ENCODE measurements at regions of chr22 and their contacts with region 1.

Region 1: DNA sequence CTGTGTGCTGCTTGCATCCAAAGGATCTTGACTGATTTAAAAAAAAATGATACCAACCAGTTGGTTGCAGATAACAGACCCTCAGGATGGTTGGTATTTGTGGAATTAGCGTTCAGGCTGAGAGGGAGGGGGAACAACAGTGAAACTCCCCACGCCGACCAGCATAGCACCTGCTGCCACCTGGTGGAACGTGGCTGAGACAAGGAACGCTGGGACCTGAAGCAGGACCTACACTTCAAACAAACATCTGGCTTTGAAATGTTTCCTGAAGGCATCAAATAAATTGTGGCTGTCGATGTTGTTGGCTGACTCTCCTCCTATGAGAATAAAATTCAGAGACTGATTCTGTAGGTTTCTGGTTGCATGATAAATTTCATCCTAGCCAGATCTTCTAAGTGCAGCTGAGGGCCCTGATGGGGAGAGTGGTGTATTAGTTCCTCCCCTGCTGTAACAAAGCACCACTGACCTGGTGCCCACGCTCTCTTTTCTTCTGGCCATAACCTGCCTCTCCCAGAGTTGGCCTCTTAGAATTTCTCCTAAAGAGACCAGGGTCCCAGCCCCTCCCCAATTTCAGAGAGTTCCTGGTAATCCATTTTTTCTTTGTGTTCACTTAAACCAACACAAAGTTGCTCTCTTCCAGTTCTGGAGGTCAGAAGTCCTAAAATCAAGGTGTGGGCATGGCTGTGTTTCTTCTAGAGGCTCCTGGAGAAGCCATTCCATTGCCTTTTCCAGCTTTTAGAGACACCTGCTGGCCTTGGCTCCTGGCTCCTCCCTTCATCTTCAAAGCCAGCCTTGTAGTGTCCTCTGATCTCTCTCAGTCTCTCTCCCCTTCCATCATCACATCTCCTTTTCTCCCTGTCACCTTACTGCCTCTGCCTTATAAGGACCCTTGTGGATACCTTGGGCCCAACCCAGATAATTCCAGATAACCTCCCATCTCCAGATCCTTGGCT is 17.3 kb downstream of the APOL2 start:
- DNase-seq: peak; percentile 57
- H3K4me3 ChIP-seq: no peak overlapping the region
- H3K27ac ChIP-seq: no peak overlapping the region
- H3K4me1 ChIP-seq: peaks cover 0 to 7% of the 10 kb centered on the region in 2 experiments; a peak in 1 of 4 replicates
- H3K27me3 ChIP-seq: peaks cover 7% of the 10 kb centered on the region; the same call in 1 of the 2 replicates
- CTCF ChIP-seq: peak; percentile 66
- EP300 ChIP-seq: no peak
- RAD21 ChIP-seq: peak; percentile 67

Region 2: DNA sequence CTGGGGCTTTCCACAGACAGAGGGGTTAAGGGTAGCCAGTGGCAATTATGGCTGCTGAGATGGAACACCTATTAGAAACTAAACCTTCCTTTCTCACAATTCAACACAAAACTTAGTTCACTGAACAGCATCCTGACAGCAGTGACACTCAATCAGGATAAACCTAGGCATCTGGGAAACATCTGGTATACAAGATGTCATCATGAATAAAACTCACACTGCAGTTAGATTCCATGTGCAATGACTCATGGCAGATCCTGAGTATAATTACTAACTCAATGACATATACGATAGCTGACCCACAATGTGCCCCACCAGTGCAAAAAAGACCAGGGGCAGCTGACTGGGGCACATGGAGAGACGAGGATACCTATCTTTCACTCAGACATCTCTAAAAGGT is 211.2 kb before region 1 on chr22:
- CTCF ChIA-PET with region 1: no interaction called
- POLR2A ChIA-PET with region 1: no interaction called
- DNase-seq: peak; percentile 66
- H3K4me3 ChIP-seq: no peak overlapping the region
- H3K27ac ChIP-seq: peak overlapping the region; percentile 72 to 96
- H3K4me1 ChIP-seq: peaks cover 52 to 57% of the 10 kb centered on the region in 2 experiments
- H3K27me3 ChIP-seq: no peaks in the 10 kb centered on the region
- CTCF ChIP-seq: no peak
- EP300 ChIP-seq: peak; percentile 96 to 97
- RAD21 ChIP-seq: peak; percentile 19; the same call in 1 of the 2 replicates

Region 3: GRCh38 chr22:36239401-36240171 is 17.5 kb after region 1 on chr22 and contains the start of gene APOL2:
- CTCF ChIA-PET with region 1: interaction called, 30 read pairs
- POLR2A ChIA-PET with region 1: no interaction called
- DNase-seq: peak; percentile 85
- H3K4me3 ChIP-seq: peak within 1 kb of the TSS; percentile 61 to 79
- H3K27ac ChIP-seq: peak within 1 kb of the TSS; percentile 79 to 91
- H3K4me1 ChIP-seq: peaks cover 10 to 25% of the 10 kb centered on the region in 2 experiments; a peak in 1 of 4 replicates
- H3K27me3 ChIP-seq: no peaks in the 10 kb centered on the region
- CTCF ChIP-seq: peak; percentile 65
- EP300 ChIP-seq: no peak
- RAD21 ChIP-seq: peak; percentile 66
- polyA plus RNA-seq, gene APOL2: 8.3 and 9.4 TPM in 2 replicates